B cell (primary cell): ENCODE measurements at regions of chr3 and their contacts with region 1.

Region 1: DNA sequence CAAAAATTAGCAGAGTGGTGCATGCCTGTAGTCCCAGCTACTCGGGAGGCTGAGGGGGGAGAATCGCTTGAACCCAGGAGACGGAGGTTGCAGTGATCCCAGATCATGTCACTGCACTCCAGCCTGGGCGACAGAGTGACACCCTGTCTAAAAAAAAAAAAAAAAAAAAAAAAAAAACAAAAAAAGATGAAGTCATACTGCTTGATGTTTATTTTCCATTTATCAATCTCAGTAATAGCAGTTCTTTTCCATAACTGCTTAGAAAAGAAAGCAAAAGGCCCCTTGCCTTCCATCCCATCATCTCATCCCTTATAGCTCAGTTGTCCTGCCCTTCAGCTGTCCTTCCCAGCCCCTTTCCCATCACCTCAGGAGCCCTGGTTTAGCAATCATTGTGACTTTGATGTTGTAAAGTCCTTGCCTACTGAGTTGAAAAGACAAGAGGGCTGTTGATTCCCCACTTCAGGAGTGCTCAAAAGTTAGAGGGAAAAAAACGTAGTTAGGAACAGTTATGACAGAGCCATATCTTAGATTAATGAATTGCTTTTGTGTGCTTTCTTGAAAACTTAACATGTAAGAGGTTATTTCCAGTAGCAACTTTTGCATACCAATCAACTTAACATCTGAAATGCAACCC is 18.0 kb upstream of the THRB start:
- DNase-seq: no peak
- ATAC-seq: no peak
- H3K4me3 ChIP-seq: no peak overlapping the region
- H3K4me3 Mint-ChIP-seq: no peak overlapping the region
- H3K27ac ChIP-seq: no peak overlapping the region
- H3K27ac Mint-ChIP-seq: no peak overlapping the region
- H3K4me1 ChIP-seq: peaks cover 9 to 11% of the 10 kb centered on the region in 2 donors
- H3K4me1 Mint-ChIP-seq: peaks cover 14% of the 10 kb centered on the region
- H3K27me3 ChIP-seq: peaks cover 0 to 4% (median 0%) of the 10 kb centered on the region in 4 experiments
- H3K27me3 Mint-ChIP-seq: no peaks in the 10 kb centered on the region
- CTCF ChIP-seq: no peak

Region 2: DNA sequence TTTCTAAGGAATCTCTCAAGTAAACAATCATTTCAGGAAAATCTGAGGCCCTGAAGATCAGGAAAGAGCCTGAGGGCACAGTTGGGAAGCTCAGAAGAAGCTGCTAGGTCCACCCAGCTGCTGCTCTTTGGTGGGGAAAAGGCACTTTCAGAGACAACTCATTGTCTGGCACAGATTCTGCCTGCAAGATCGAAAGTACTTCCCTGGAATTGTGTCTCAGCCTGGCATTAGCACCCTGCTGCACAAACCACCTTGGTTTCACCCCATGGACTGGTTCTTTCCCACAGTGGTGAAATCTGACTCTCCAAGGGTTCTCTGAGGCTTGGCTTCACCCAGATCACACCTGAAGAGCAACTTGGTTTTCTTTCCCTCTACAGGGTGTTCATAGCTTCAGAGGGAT is 36.8 kb before region 1 on chr3:
- CTCF ChIA-PET with region 1: no interaction called
- POLR2A ChIA-PET with region 1: no interaction called
- intact Hi-C with region 1: no loop called
- DNase-seq: no peak
- ATAC-seq: no peak
- H3K4me3 ChIP-seq: no peak overlapping the region
- H3K4me3 Mint-ChIP-seq: no peak overlapping the region
- H3K27ac ChIP-seq: no peak overlapping the region
- H3K27ac Mint-ChIP-seq: no peak overlapping the region
- H3K4me1 ChIP-seq: no peaks in the 10 kb centered on the region
- H3K4me1 Mint-ChIP-seq: no peaks in the 10 kb centered on the region
- H3K27me3 ChIP-seq: no peaks in the 10 kb centered on the region
- H3K27me3 Mint-ChIP-seq: peaks cover 6% of the 10 kb centered on the region
- CTCF ChIP-seq: no peak

Region 3: GRCh38 chr3:24529207-24529606 is 16.5 kb after region 1 on chr3:
- CTCF ChIA-PET with region 1: no interaction called
- POLR2A ChIA-PET with region 1: interaction called, 11 read pairs
- intact Hi-C with region 1: no loop called
- DNase-seq: no peak
- ATAC-seq: no peak
- H3K4me3 ChIP-seq: no peak overlapping the region
- H3K4me3 Mint-ChIP-seq: no peak overlapping the region
- H3K27ac ChIP-seq: no peak overlapping the region
- H3K27ac Mint-ChIP-seq: no peak overlapping the region
- H3K4me1 ChIP-seq: no peaks in the 10 kb centered on the region
- H3K4me1 Mint-ChIP-seq: no peaks in the 10 kb centered on the region
- H3K27me3 ChIP-seq: no peaks in the 10 kb centered on the region
- H3K27me3 Mint-ChIP-seq: peaks cover 7% of the 10 kb centered on the region
- CTCF ChIP-seq: no peak